PC-3 (cell line): ENCODE measurements at regions of chr1 and their contacts with region 1.

Region 1: GRCh38 chr1:20212685-20213331 is 26.5 kb upstream of the PLA2G2C start:
- DNase-seq: peak; percentile 92
- ATAC-seq: peak; percentile 77
- H3K4me3 ChIP-seq: peak overlapping the region; percentile 36; the same call in 1 of the 2 replicates
- H3K27ac ChIP-seq: peak overlapping the region; percentile 99
- H3K4me1 ChIP-seq: peaks cover 48% of the 10 kb centered on the region
- H3K27me3 ChIP-seq: no peaks in the 10 kb centered on the region
- CTCF ChIP-seq: peak; percentile 88

Region 2: GRCh38 chr1:20100632-20101355 is 112.0 kb before region 1 on chr1:
- CTCF ChIA-PET with region 1: no interaction called
- POLR2A ChIA-PET with region 1: no interaction called
- intact Hi-C with region 1: loop called (anchors 5 kb)
- DNase-seq: peak; percentile 77
- ATAC-seq: peak; percentile 79
- H3K4me3 ChIP-seq: no peak overlapping the region
- H3K27ac ChIP-seq: no peak overlapping the region
- H3K4me1 ChIP-seq: peaks cover 24% of the 10 kb centered on the region
- H3K27me3 ChIP-seq: no peaks in the 10 kb centered on the region
- CTCF ChIP-seq: peak; percentile 86

Region 3: DNA sequence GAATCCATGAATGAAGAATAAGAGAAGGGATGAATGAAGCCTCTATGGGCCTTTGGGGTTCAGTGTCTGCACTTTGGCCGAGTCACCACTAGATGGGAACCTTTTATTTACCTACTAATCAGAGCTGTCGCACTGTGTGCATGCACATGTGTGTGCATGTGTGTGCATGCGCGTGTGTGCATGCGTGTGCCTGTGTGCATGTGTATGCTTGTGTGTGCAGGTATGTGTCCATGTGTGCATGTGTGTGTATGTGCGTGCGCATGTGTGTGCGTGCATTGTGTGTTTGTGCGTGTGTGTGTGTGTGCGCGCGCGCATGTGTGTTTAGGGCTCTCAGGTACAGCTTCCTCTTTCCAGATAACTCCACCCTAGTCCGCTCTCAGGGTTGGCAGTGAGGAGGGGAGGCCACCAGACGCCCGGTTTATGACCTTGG is 47.3 kb before region 1 on chr1:
- CTCF ChIA-PET with region 1: interaction called, 25 read pairs
- POLR2A ChIA-PET with region 1: no interaction called
- intact Hi-C with region 1: loop called (anchors 2 kb)
- DNase-seq: peak; percentile 62
- ATAC-seq: peak; percentile 63
- H3K4me3 ChIP-seq: 0 out of 2 replicates have a peak overlapping the region, but pooled peaks have one; percentile 25
- H3K27ac ChIP-seq: peak overlapping the region; percentile 89
- H3K4me1 ChIP-seq: peaks cover 25% of the 10 kb centered on the region
- H3K27me3 ChIP-seq: no peaks in the 10 kb centered on the region
- CTCF ChIP-seq: peak; percentile 72

Region 4: DNA sequence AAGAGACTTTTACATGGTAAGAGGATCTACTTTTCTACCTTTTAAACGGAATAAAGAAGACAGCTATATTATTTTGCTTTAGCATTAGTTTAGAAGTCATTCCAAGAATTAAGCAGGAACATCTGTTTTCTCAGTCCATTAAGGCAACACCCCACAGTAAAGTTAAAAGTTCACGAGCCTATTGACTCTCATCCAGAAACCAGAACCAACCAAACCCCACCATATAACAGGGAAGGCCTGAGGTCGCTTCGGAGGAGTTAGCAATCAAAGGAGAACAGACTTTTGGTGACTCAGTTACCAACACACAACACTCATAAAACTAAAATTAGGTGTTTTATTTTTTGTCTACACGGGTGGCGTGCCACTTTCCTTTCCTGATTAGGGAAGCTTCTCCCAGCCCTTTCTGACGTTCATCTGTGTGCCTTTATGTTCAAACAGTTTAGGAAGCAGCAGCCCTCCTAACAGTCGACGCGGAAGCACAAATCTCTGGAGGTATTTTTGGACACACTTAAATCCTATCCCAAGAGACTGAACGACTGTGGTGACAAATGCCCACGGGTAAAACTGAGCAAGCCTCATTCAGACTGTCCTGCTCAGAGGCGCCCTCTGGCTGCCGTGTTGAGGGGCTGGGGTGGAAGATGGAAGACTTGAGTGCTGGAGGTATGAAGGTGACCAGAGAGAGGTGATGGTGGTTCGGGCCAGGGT is 17.9 kb before region 1 on chr1:
- CTCF ChIA-PET with region 1: interaction called, 25 read pairs
- POLR2A ChIA-PET with region 1: no interaction called
- intact Hi-C with region 1: loop called (anchors 1 kb)
- DNase-seq: peak; percentile 77
- ATAC-seq: peak; percentile 17
- H3K4me3 ChIP-seq: no peak overlapping the region
- H3K27ac ChIP-seq: peak overlapping the region; percentile 65
- H3K4me1 ChIP-seq: peaks cover 46% of the 10 kb centered on the region
- H3K27me3 ChIP-seq: no peaks in the 10 kb centered on the region
- CTCF ChIP-seq: peak; percentile 94

Region 5: GRCh38 chr1:20430355-20431175 is 217.8 kb after region 1 on chr1:
- CTCF ChIA-PET with region 1: interaction called, 8 read pairs
- POLR2A ChIA-PET with region 1: no interaction called
- intact Hi-C with region 1: loop called (anchors 1 kb)
- DNase-seq: peak; percentile 47
- ATAC-seq: peak; percentile 47; the same call in 1 of the 2 replicates
- H3K4me3 ChIP-seq: no peak overlapping the region
- H3K27ac ChIP-seq: no peak overlapping the region
- H3K4me1 ChIP-seq: peaks cover 13% of the 10 kb centered on the region
- H3K27me3 ChIP-seq: no peaks in the 10 kb centered on the region
- CTCF ChIP-seq: peak; percentile 94

Region 6: DNA sequence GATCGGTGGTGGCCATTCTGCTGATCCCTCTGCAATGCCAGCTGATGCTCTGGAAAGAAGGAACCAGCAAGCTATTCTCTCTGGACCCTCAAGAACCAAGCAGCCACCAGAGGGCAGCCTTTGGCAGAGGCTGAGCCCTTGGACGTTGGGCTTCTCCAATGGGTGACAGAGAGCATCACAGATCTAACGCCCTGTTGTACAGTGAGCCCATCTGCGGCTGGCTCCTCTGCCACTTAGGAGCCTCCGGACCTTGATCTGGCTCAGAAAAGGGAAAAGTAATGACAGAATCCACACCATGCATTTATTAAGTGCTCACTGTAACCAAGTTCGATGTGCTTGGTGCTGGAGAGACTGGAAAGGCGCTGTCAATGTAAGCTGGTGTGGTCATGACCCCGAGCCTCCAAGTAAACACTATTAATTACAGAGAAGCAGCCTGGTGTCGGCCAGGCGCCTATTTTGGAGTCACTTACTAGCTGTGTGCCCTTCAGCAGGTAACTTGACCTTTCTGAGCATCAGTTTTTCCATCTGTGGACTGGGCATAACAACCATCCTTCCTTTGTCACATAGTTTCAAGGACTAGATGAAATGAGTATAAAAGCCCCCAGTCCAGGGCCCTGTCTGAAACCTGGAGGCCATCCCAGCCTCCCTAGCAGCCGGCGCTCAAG is 1042.6 kb after region 1 on chr1:
- CTCF ChIA-PET with region 1: interaction called, 18 read pairs
- POLR2A ChIA-PET with region 1: no interaction called
- intact Hi-C with region 1: no loop called
- DNase-seq: peak; percentile 92
- ATAC-seq: peak; percentile 60
- H3K4me3 ChIP-seq: no peak overlapping the region
- H3K27ac ChIP-seq: no peak overlapping the region
- H3K4me1 ChIP-seq: peaks cover 21% of the 10 kb centered on the region
- H3K27me3 ChIP-seq: no peaks in the 10 kb centered on the region
- CTCF ChIP-seq: peak; percentile 89